ENCODE measurements at regions of chr15 and their contacts with region 1.

Region 1: DNA sequence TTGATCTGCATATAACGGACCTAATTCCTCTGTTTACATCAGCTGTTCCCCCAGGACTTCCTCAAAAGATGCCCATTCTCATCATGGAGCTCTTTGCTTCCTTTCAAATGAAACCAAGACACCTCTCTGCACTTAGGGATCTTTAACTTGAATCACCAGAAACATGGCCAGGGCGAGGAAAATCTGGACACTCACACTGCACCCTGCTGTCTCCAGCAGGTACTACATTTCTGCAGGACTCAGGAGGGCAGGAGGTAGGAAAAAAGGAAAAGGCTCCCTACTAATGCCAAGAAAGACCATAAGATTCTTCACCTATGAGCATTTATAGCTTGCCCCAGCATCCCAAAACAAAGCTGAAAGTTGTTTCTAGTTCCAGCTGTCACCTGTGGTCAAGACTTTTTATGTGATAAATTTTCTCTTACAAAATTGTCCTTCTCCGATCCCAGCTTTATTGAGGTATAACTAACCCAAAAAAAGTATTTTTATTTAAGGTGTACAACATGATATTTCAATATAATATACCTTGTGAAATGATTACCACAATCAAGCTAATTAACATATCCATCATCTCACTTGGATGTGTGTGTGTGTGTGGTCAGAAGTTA is 87.3 kb upstream of the C15orf61 start:
- DNase-seq: peak; percentile 15
- ATAC-seq: peak; percentile 79
- H3K4me3 ChIP-seq: no peak overlapping the region
- H3K27ac ChIP-seq: no peak overlapping the region
- H3K4me1 ChIP-seq: no peaks in the 10 kb centered on the region
- H3K27me3 ChIP-seq: no peaks in the 10 kb centered on the region
- CTCF ChIP-seq: peak; percentile 58 to 78 (median 72)
- EP300 ChIP-seq: no peak
- POLR2A ChIP-seq: no peak
- RAD21 ChIP-seq: peak; percentile 68

Region 2: GRCh38 chr15:66940368-66940767 is 493.2 kb before region 1 on chr15:
- CTCF ChIA-PET with region 1: interaction called, 7 read pairs
- POLR2A ChIA-PET with region 1: no interaction called
- RAD21 ChIA-PET with region 1: interaction called, 14 read pairs
- SMC1A ChIA-PET with region 1: interaction called, 20 read pairs
- in situ Hi-C with region 1: loop called (anchors 5 kb)
- intact Hi-C with region 1: no loop called
- DNase-seq: peak; percentile 76
- ATAC-seq: peak; percentile 88
- H3K4me3 ChIP-seq: no peak overlapping the region
- H3K27ac ChIP-seq: no peak overlapping the region
- H3K4me1 ChIP-seq: peaks cover 7% of the 10 kb centered on the region; the same call in 1 of the 2 replicates
- H3K27me3 ChIP-seq: no peaks in the 10 kb centered on the region; a peak in 1 of 4 replicates
- CTCF ChIP-seq: no peak
- EP300 ChIP-seq: no peak
- POLR2A ChIP-seq: no peak
- RAD21 ChIP-seq: no peak

Region 3: GRCh38 chr15:66946578-66947164 is 486.9 kb before region 1 on chr15:
- CTCF ChIA-PET with region 1: interaction called, 34 read pairs
- POLR2A ChIA-PET with region 1: no interaction called
- RAD21 ChIA-PET with region 1: interaction called, 14 read pairs
- SMC1A ChIA-PET with region 1: interaction called, 20 read pairs
- in situ Hi-C with region 1: loop called (anchors 5 kb)
- intact Hi-C with region 1: loop called (anchors 1 kb)
- DNase-seq: peak; percentile 39
- ATAC-seq: peak; percentile 87
- H3K4me3 ChIP-seq: no peak overlapping the region
- H3K27ac ChIP-seq: no peak overlapping the region
- H3K4me1 ChIP-seq: peaks cover 6% of the 10 kb centered on the region
- H3K27me3 ChIP-seq: no peaks in the 10 kb centered on the region; a peak in 1 of 4 replicates
- CTCF ChIP-seq: peak; percentile 85 to 97 (median 95)
- EP300 ChIP-seq: no peak
- POLR2A ChIP-seq: no peak
- RAD21 ChIP-seq: peak; percentile 98

Region 4: GRCh38 chr15:67303490-67304363 is 129.9 kb before region 1 on chr15:
- CTCF ChIA-PET with region 1: interaction called, 16 read pairs
- POLR2A ChIA-PET with region 1: interaction called, 3 read pairs
- RAD21 ChIA-PET with region 1: interaction called, 5 read pairs
- SMC1A ChIA-PET with region 1: interaction called, 7 read pairs
- in situ Hi-C with region 1: no loop called
- intact Hi-C with region 1: no loop called
- DNase-seq: peak; percentile 24
- ATAC-seq: peak; percentile 70
- H3K4me3 ChIP-seq: no peak overlapping the region
- H3K27ac ChIP-seq: no peak overlapping the region
- H3K4me1 ChIP-seq: no peaks in the 10 kb centered on the region
- H3K27me3 ChIP-seq: no peaks in the 10 kb centered on the region
- CTCF ChIP-seq: peak; percentile 38 to 68 (median 46); a peak in 5 of 6 replicates
- EP300 ChIP-seq: no peak
- POLR2A ChIP-seq: no peak
- RAD21 ChIP-seq: peak; percentile 94

Region 5: GRCh38 chr15:67311731-67312130 is 121.9 kb before region 1 on chr15:
- CTCF ChIA-PET with region 1: interaction called, 5 read pairs
- POLR2A ChIA-PET with region 1: no interaction called
- RAD21 ChIA-PET with region 1: interaction called, 3 read pairs
- SMC1A ChIA-PET with region 1: interaction called, 4 read pairs
- in situ Hi-C with region 1: no loop called
- intact Hi-C with region 1: loop called (anchors 10 kb)
- DNase-seq: no peak
- ATAC-seq: no peak
- H3K4me3 ChIP-seq: no peak overlapping the region
- H3K27ac ChIP-seq: no peak overlapping the region
- H3K4me1 ChIP-seq: no peaks in the 10 kb centered on the region
- H3K27me3 ChIP-seq: no peaks in the 10 kb centered on the region
- CTCF ChIP-seq: no peak
- EP300 ChIP-seq: no peak
- POLR2A ChIP-seq: no peak
- RAD21 ChIP-seq: no peak

Region 6: GRCh38 chr15:67444100-67444499 is 10.5 kb after region 1 on chr15:
- CTCF ChIA-PET with region 1: interaction called, 11 read pairs
- POLR2A ChIA-PET with region 1: no interaction called
- RAD21 ChIA-PET with region 1: no interaction called
- SMC1A ChIA-PET with region 1: interaction called, 5 read pairs
- in situ Hi-C with region 1: no loop called
- intact Hi-C with region 1: no loop called
- DNase-seq: no peak
- ATAC-seq: no peak
- H3K4me3 ChIP-seq: no peak overlapping the region
- H3K27ac ChIP-seq: no peak overlapping the region
- H3K4me1 ChIP-seq: no peaks in the 10 kb centered on the region
- H3K27me3 ChIP-seq: no peaks in the 10 kb centered on the region
- CTCF ChIP-seq: no peak
- EP300 ChIP-seq: no peak
- POLR2A ChIP-seq: no peak
- RAD21 ChIP-seq: no peak